Activated naive CD4-positive, alpha-beta T cell treated with anti-CD3 and anti-CD28 coated beads for 36 hours (primary cell): ENCODE measurements at regions of chr3 and their contacts with region 1.

Region 1: GRCh38 chr3:148991194-148992026 is at the start of gene GYG1:
- DNase-seq: peak; percentile 75
- H3K4me3 Mint-ChIP-seq: peak within 1 kb of the TSS; percentile 61
- H3K27ac Mint-ChIP-seq: peak within 1 kb of the TSS; percentile 33
- H3K4me1 Mint-ChIP-seq: peaks cover 19% of the 10 kb centered on the region
- H3K27me3 Mint-ChIP-seq: no peaks in the 10 kb centered on the region
- total RNA-seq, gene GYG1: 13.5 to 13.9 TPM

Region 2: GRCh38 chr3:148981273-148981672 is 10.1 kb before region 1 on chr3:
- CTCF ChIA-PET with region 1: no interaction called
- intact Hi-C with region 1: no loop called
- DNase-seq: no peak
- H3K4me3 Mint-ChIP-seq: no peak overlapping the region
- H3K27ac Mint-ChIP-seq: no peak overlapping the region
- H3K4me1 Mint-ChIP-seq: no peaks in the 10 kb centered on the region
- H3K27me3 Mint-ChIP-seq: no peaks in the 10 kb centered on the region

Region 3: DNA sequence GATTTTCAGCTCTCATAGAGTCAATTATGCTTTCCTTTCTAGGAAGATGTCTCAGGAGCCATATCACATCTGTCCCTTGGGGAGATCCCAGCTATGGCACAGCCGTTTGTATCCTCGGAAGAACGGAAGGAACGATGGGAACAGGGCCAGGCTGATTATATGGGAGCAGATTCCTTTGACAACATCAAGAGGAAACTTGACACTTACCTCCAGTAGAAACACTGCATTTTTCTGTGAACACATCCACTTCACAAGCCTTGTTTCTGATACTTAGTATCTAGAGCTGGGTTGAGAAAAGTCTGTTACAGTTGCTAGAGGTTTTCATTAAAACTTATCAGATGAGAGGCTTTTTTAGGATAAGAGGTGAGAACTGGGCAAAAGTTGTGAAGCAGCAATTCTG is 35.3 kb after region 1 on chr3:
- CTCF ChIA-PET with region 1: no interaction called
- intact Hi-C with region 1: no loop called
- DNase-seq: no peak
- H3K4me3 Mint-ChIP-seq: no peak overlapping the region
- H3K27ac Mint-ChIP-seq: peak overlapping the region; percentile 36
- H3K4me1 Mint-ChIP-seq: peaks cover 4% of the 10 kb centered on the region
- H3K27me3 Mint-ChIP-seq: no peaks in the 10 kb centered on the region

Region 4: GRCh38 chr3:149042789-149043386 is 51.5 kb after region 1 on chr3:
- CTCF ChIA-PET with region 1: no interaction called
- intact Hi-C with region 1: loop called (anchors 1 kb)
- DNase-seq: no peak
- H3K4me3 Mint-ChIP-seq: no peak overlapping the region
- H3K27ac Mint-ChIP-seq: no peak overlapping the region
- H3K4me1 Mint-ChIP-seq: peaks cover 15% of the 10 kb centered on the region
- H3K27me3 Mint-ChIP-seq: no peaks in the 10 kb centered on the region

Region 5: GRCh38 chr3:149129326-149130205 is 138.2 kb after region 1 on chr3 and contains the start of gene HPS3:
- CTCF ChIA-PET with region 1: no interaction called
- intact Hi-C with region 1: loop called (anchors 1 kb)
- DNase-seq: peak; percentile 79
- H3K4me3 Mint-ChIP-seq: peak within 1 kb of the TSS; percentile 82
- H3K27ac Mint-ChIP-seq: peak within 1 kb of the TSS; percentile 25
- H3K4me1 Mint-ChIP-seq: peaks cover 29% of the 10 kb centered on the region
- H3K27me3 Mint-ChIP-seq: peaks cover 2% of the 10 kb centered on the region
- total RNA-seq, gene HPS3: 11.5 to 13.5 TPM

Region 6: GRCh38 chr3:149273096-149273751 is 281.8 kb after region 1 on chr3:
- CTCF ChIA-PET with region 1: interaction called, 3 read pairs
- intact Hi-C with region 1: loop called (anchors 1 kb)
- DNase-seq: peak; percentile 34
- H3K4me3 Mint-ChIP-seq: no peak overlapping the region
- H3K27ac Mint-ChIP-seq: no peak overlapping the region
- H3K4me1 Mint-ChIP-seq: peaks cover 10% of the 10 kb centered on the region
- H3K27me3 Mint-ChIP-seq: no peaks in the 10 kb centered on the region

Region 7: GRCh38 chr3:149319750-149320149 is 328.3 kb after region 1 on chr3:
- CTCF ChIA-PET with region 1: no interaction called
- intact Hi-C with region 1: no loop called
- DNase-seq: no peak
- H3K4me3 Mint-ChIP-seq: no peak overlapping the region
- H3K27ac Mint-ChIP-seq: no peak overlapping the region
- H3K4me1 Mint-ChIP-seq: no peaks in the 10 kb centered on the region
- H3K27me3 Mint-ChIP-seq: peaks cover 12% of the 10 kb centered on the region